Left colon (tissue), 2 donors: ENCODE measurements at regions of chr16 and their contacts with region 1.

Region 1: GRCh38 chr16:68264128-68265077 is at the start of gene SLC7A6:
- DNase-seq: peak; percentile 68 to 84
- ATAC-seq: peak; percentile 68
- total RNA-seq, gene SLC7A6: 23.9 to 45.9 TPM

Region 2: DNA sequence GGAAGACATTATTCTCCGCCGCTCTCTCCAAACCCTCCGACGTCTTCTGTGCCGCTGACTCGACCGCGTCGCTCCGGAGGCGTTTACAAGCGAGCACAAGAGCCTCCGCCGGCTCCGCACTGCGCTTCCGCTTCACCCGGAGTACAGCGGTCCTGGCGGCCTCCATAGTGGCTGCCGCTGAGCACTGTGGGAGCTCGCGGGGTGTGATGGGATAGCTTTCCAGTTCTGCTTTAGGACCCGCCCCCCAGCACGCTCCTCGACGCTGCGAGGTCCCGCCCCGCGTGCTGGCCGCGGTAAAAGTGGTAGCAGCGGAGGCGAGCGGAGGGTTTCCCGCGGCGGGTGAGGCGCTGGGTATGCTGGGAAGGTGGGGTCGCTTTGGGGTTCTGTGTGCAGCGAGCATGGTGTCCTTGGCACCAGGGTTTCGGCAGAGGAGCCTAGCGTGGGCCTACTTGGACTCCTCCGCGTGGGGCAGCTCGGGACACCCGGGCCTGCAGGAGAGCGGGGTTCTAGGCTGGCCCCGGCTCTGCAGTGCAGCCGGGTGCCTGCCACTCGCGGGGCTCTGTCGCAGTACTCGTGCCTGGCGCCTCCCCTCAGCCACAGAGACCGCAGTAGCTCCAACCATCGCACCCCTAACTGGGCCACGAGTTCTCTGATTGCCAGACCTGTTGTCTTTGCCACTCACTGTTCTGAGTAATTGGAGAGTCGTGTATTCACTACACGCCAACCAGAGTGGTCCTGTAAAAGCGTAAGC is 46.5 kb after region 1 on chr16 and contains the starts of genes PRMT7 and SLC7A6OS:
- intact Hi-C with region 1: loop called in 1 of 2 experiments (anchors 5 kb)
- DNase-seq: peak; percentile 93 to 95
- ATAC-seq: peak; percentile 99
- total RNA-seq, gene PRMT7: 26.3 to 27.7 TPM
- total RNA-seq, gene SLC7A6OS: 13.9 to 15.4 TPM

Region 3: GRCh38 chr16:68328151-68328859 is 63.9 kb after region 1 on chr16:
- intact Hi-C with region 1: loop called in 1 of 2 experiments (anchors 2 kb)
- DNase-seq: peak; percentile 68 to 78
- ATAC-seq: peak; percentile 99

Region 4: GRCh38 chr16:68382296-68382718 is 117.9 kb after region 1 on chr16:
- intact Hi-C with region 1: no loop called
- DNase-seq: peak; percentile 83 to 90
- ATAC-seq: peak; percentile 70